AG04450 (cell line): ENCODE measurements at regions of chr15 and their contacts with region 1.

Region 1: GRCh38 chr15:94230956-94231722 is at the start of gene MCTP2:
- DNase-seq: peak; percentile 39
- H3K4me3 ChIP-seq: peak within 1 kb of the TSS; percentile 65
- H3K27ac ChIP-seq: peak within 1 kb of the TSS; percentile 84
- H3K27me3 ChIP-seq: no peaks in the 10 kb centered on the region
- CTCF ChIP-seq: 0 out of 2 replicates have a peak, but pooled peaks have one; percentile 12
- polyA plus RNA-seq, gene MCTP2: 17.8 and 18.1 TPM in 2 replicates

Region 2: GRCh38 chr15:94163999-94164807 is 66.9 kb before region 1 on chr15:
- CTCF ChIA-PET with region 1: interaction called, 10 read pairs
- POLR2A ChIA-PET with region 1: interaction called, 3 read pairs
- DNase-seq: peak; percentile 49
- H3K4me3 ChIP-seq: no peak overlapping the region
- H3K27ac ChIP-seq: no peak overlapping the region
- H3K27me3 ChIP-seq: no peaks in the 10 kb centered on the region
- CTCF ChIP-seq: peak; percentile 83

Region 3: GRCh38 chr15:94206463-94207167 is 24.5 kb before region 1 on chr15:
- CTCF ChIA-PET with region 1: no interaction called
- POLR2A ChIA-PET with region 1: no interaction called
- DNase-seq: peak; percentile 73
- H3K4me3 ChIP-seq: no peak overlapping the region
- H3K27ac ChIP-seq: peak overlapping the region; percentile 68
- H3K27me3 ChIP-seq: no peaks in the 10 kb centered on the region
- CTCF ChIP-seq: no peak

Region 4: GRCh38 chr15:95329362-95329761 is 1098.2 kb after region 1 on chr15:
- CTCF ChIA-PET with region 1: no interaction called
- POLR2A ChIA-PET with region 1: interaction called, 10 read pairs
- DNase-seq: no peak
- H3K4me3 ChIP-seq: no peak overlapping the region
- H3K27ac ChIP-seq: no peak overlapping the region
- H3K27me3 ChIP-seq: no peaks in the 10 kb centered on the region
- CTCF ChIP-seq: no peak